Motor neuron (in vitro differentiated cells): ENCODE measurements at regions of chr7 and their contacts with region 1.

Region 1: GRCh38 chr7:19305698-19306097 is 160.5 kb upstream of the FERD3L start:
- ATAC-seq: no peak
- H3K4me3 ChIP-seq: no peak overlapping the region
- H3K27ac ChIP-seq: no peak overlapping the region
- H3K4me1 ChIP-seq: no peaks in the 10 kb centered on the region

Region 2: DNA sequence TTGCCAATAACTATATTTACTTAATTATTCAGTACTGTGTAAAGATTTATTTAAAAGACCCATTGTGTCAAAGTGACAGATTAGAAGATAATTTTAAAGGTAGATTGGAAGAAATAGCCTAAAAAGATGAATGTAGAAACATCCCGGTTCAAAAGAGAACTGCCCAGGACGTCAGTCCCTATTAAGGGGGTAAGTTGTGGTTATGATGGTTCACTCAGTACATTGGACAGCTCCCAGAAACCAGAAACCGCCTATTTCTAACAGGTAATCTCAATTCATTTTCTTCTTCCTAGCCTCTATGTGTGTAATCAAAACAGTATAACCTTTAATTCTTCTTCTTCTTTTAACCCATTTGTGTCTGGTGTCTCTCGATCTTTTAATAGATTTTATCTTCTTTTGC is 159.0 kb before region 1 on chr7:
- in situ Hi-C with region 1: loop called in 1 of 9 experiments (anchors 25 kb)
- ATAC-seq: peak in 1 of 8 experiments; percentile 25
- H3K4me3 ChIP-seq: no peak overlapping the region
- H3K27ac ChIP-seq: no peak overlapping the region
- H3K4me1 ChIP-seq: no peaks in the 10 kb centered on the region

Region 3: GRCh38 chr7:19215412-19215811 is 90.3 kb before region 1 on chr7:
- in situ Hi-C with region 1: loop called in 1 of 9 experiments (anchors 25 kb)
- ATAC-seq: peak; percentile 53 to 96 (median 74)
- H3K4me3 ChIP-seq: no peak overlapping the region
- H3K27ac ChIP-seq: no peak overlapping the region
- H3K4me1 ChIP-seq: peaks cover 6% of the 10 kb centered on the region in 2 donors

Region 4: DNA sequence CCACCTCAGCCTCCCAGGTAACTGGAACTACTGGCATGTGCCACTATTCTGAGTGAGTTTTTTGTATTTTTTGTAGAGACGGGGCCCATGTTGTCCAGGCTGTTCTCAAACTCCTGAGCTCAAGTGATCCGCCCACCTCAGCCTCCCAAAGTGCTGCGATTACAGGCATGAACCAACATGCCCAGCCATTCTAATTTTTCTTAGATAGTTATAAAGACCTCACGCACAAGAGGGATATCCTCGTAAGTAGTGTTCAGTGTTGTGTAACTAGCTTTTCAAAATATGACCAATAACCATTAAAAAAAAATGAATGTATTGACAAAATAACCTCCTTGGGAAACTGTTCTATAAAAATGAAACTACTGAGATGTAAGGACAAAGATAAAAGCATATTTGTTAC is 70.0 kb before region 1 on chr7:
- in situ Hi-C with region 1: no loop called
- ATAC-seq: no peak
- H3K4me3 ChIP-seq: no peak overlapping the region
- H3K27ac ChIP-seq: no peak overlapping the region
- H3K4me1 ChIP-seq: no peaks in the 10 kb centered on the region